Left cardiac atrium (tissue), 4 donors: ENCODE measurements at regions of chr3 and their contacts with region 1.

Region 1: GRCh38 chr3:192566706-192567290 is 160.5 kb downstream of the FGF12 start:
- DNase-seq: peak; percentile 80
- ATAC-seq: peak; percentile 69 to 87

Region 2: GRCh38 chr3:192171213-192171612 is 395.6 kb before region 1 on chr3:
- intact Hi-C with region 1: no loop called
- DNase-seq: no peak
- ATAC-seq: no peak

Region 3: DNA sequence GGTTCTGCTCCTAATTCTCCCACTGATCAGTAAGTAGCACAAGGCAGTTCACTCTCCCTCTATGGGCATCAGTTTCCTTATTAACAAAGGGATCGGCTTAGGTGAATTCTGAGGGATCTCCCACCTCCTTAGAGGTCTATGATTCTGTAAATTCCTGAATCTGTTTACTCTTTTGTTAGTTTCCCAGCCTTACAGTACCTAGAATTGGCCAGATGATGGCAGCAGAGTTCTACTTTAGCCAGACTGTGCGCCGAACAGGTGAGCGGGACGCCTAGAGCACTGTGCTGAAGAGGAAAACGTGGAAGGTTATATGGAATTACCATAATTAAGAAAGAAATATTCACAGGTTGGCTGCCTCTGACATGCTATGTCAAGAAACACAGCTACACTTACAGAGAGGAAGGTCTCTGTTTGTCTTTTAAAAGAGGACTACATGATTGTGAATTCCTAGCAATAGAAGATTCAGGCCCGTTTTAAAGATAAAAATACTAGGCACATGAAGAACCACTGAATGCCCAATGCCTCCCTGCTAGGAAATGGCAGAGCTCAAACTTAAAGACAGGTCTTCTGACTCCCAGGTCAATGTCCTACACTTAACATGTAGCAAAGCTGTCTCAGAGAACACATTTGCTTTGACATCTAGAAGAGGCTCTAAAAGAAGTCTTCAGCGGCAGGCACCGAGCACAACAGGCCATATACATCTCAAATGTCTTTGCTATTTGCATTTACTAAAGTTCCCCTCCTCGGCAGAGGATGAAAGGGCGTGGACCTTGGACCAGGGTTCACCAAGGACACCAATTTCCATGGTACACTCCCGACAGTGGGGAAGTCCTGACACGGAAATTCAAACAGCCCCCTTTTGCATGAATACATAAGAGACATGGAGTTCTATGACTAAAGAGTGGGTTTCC is 99.3 kb before region 1 on chr3:
- intact Hi-C with region 1: loop called in 1 of 2 experiments (anchors 5 kb)
- DNase-seq: peak; percentile 46
- ATAC-seq: peak; percentile 77 to 83

Region 4: DNA sequence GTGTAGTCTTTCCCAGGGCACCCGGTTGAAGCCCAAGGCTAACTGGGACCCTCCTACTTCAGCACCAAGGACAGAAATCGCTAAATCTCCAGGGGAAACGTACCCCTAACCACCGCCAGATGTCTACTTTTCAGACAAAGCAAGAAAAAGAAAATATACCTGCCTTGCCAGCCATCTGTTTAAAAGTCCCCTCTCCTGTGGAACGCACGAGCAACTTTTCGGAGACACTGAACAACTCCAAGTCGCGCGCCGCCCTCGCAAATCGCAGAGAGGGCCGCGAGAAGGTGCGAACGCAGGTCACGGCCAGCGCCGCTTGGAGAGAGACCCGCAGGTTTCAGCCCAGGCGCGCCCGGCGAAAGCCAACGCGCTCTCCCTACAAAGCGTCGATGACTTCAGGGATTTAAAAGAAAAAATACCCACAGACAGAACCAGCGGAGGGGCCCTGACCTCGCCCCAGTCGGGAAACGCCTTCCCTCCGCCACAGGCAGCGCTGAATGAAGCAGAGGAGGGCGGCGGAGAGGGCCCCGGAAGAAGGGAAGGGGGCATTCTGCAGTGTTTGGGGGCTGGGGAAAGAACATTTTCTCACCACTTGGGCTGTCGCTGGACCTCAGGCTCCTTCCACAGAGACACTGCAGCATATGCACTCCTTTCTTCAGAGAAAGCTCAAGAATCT is 52.6 kb before region 1 on chr3:
- intact Hi-C with region 1: no loop called
- DNase-seq: no peak
- ATAC-seq: peak in 1 of 2 donors; percentile 29

Region 5: GRCh38 chr3:192637803-192638202 is 71.0 kb after region 1 on chr3:
- intact Hi-C with region 1: loop called (anchors 10 kb)
- DNase-seq: no peak
- ATAC-seq: peak in 1 of 2 donors; percentile 20

Region 6: DNA sequence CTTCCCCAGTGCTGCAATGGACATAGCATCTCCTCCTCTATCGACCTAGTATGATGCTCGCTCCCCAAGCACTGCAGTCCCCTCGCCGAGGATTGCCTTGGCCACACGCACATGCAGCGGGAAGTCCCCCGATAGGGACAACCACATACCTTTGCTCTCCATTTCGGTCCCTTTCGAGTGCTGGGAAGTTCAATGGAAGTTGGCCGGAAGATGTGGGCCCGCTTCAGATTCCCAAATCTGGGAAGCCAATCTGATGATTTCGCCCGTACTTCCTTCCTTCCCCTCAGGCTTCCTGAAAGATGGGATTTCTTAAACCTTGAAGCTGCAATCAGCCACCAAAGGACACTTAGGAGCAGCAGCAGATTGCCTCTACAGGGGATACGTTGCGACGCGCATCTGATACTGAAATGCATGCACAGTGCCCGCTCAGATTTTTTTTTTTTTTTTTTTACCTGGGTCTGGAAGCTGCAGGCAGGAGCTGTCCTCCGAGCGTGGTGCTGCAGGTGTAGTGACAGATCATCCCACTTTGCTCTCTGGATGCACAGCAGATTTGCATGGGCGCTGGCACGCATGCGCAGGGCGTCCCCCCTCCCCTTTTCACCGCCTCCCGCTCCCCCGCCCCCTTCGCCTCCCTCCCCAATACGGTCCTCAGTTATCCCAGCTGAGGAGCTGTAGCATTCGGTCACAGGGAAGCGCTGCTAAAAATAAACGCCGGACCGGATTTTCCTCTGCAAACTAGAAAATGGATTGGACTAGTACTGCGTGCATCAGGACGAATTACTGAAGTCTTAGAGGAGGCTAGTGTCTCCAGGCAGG is 160.4 kb after region 1 on chr3 and contains the start of gene FGF12:
- intact Hi-C with region 1: loop called in 1 of 2 experiments (anchors 2 kb)
- DNase-seq: peak; percentile 82
- ATAC-seq: peak; percentile 95 to 96
- total RNA-seq, gene FGF12: 245 to 291 TPM

Region 7: GRCh38 chr3:192772240-192772894 is 205.6 kb after region 1 on chr3:
- intact Hi-C with region 1: loop called (anchors 2 to 10 kb)
- DNase-seq: peak; percentile 38
- ATAC-seq: peak; percentile 87 to 91

Region 8: DNA sequence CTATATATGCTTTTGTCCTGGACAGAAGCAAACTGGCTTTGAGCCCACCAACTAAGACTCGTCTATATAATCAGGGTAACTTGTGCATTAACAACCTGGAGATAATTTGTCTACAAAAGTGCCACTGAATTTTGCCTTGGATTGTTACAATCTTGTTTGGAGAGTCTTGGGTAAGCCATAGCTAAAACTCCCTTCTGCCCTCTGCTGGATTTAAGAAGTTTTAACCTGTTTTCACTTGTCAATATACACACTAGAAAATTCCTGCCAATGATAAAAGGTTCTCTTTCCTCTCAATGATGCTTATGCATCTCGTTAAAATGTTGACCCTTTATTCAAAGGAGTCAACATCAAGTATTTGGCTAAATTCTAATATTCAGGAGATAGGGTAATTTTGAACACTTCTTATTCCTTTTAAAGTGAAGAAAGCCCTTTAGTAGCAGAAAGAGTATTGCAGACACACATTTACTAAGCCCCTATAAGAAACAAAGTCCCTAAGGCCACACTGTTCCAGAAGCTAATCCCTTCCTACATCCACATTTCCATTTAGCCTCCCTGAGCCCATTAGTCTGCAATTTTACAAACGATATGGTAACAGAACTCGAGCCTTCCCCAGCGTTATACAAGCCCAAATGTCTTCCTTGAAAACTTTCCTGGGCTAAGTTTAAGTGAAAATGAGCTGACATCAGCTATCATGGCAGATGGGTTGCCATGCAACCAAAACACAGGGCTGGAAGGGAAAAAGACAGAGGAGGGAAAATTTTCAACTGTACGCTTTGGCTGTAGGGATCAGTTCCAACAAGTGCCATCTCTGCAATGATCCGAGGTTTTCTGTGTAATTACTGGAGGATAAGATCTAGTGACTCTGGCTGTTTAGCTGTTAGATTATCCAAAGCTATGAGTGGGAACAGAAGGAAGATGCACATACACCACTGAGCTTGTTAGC is 236.4 kb after region 1 on chr3:
- intact Hi-C with region 1: loop called (anchors 1 to 10 kb)
- DNase-seq: no peak
- ATAC-seq: peak; percentile 62 to 71

Region 9: GRCh38 chr3:193564012-193564411 is 997.2 kb after region 1 on chr3:
- intact Hi-C with region 1: loop called in 1 of 2 experiments (anchors 10 kb)
- DNase-seq: no peak
- ATAC-seq: no peak